Calu3 (cell line): ENCODE measurements at regions of chrX and their contacts with region 1.

Region 1: DNA sequence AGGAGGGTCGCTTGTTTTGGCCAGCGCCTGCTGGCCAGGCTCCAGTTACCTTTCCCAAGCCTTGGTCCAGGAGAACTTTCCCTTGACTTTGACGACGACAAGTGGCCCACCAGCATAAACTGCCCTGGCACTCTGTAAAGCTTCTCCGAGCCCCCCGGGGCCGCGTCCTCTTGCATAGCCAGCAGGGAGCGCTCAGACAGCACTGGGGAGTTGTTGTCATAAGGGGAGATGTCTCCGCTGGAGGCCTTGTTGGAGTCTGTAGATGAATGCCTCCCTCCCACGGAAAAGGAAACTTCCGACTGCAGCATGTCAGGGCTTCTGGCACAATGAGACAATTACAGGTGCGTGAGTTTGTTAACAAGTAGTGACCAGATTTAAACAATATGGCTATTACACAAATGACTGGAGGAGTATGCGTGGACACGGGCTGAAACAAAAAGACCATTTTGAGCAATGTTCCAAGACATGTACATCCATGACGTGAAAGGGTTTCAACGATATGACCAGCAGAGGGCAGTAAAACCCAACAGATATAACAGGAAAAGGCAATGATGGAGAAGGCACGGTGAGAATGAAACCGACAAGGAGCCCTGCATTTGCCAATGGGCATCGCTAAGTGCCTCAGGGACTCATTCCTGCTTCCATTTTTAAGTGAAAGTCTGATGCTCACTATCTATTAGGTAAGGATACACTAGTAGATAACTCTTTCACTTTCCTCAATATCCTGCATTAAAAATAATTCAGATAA is 33.0 kb downstream of the HCCS start:
- DNase-seq: peak; percentile 67
- H3K4me3 Mint-ChIP-seq: peak overlapping the region; percentile 33
- H3K27ac Mint-ChIP-seq: no peak overlapping the region
- H3K4me1 Mint-ChIP-seq: peaks cover 10% of the 10 kb centered on the region
- H3K27me3 Mint-ChIP-seq: no peaks in the 10 kb centered on the region
- CTCF ChIP-seq: no peak

Region 2: GRCh38 chrX:11010476-11010875 is 133.6 kb before region 1 on chrX:
- CTCF ChIA-PET with region 1: no interaction called
- intact Hi-C with region 1: no loop called
- DNase-seq: no peak
- H3K4me3 Mint-ChIP-seq: no peak overlapping the region
- H3K27ac Mint-ChIP-seq: no peak overlapping the region
- H3K4me1 Mint-ChIP-seq: peaks cover 38% of the 10 kb centered on the region
- H3K27me3 Mint-ChIP-seq: no peaks in the 10 kb centered on the region
- CTCF ChIP-seq: no peak

Region 3: DNA sequence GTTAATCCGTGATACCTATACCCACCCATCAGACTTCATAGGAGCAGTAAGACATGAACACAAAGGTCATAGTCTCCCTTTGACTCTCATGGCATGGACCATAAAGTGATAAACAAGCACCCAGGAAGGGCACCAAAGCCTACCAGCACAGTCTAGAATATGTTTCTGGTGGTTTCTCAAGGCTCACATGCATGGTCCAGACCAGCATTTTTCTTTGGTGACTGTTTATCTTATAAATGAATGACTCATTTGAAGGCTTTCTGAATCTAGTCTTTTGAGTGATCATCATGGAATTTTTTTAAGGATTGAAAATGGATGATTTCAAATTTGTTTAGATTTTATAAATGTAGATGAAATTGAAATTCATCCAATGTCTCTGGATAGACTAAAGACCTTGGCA is 117.2 kb after region 1 on chrX:
- CTCF ChIA-PET with region 1: no interaction called
- intact Hi-C with region 1: loop called (anchors 10 kb)
- DNase-seq: no peak
- H3K4me3 Mint-ChIP-seq: no peak overlapping the region
- H3K27ac Mint-ChIP-seq: no peak overlapping the region
- H3K4me1 Mint-ChIP-seq: no peaks in the 10 kb centered on the region
- H3K27me3 Mint-ChIP-seq: no peaks in the 10 kb centered on the region
- CTCF ChIP-seq: no peak

Region 4: GRCh38 chrX:11287505-11287904 is 143.4 kb after region 1 on chrX:
- CTCF ChIA-PET with region 1: interaction called, 3 read pairs
- intact Hi-C with region 1: loop called (anchors 1 kb)
- DNase-seq: peak; percentile 2
- H3K4me3 Mint-ChIP-seq: no peak overlapping the region
- H3K27ac Mint-ChIP-seq: no peak overlapping the region
- H3K4me1 Mint-ChIP-seq: no peaks in the 10 kb centered on the region
- H3K27me3 Mint-ChIP-seq: no peaks in the 10 kb centered on the region
- CTCF ChIP-seq: no peak

Region 5: DNA sequence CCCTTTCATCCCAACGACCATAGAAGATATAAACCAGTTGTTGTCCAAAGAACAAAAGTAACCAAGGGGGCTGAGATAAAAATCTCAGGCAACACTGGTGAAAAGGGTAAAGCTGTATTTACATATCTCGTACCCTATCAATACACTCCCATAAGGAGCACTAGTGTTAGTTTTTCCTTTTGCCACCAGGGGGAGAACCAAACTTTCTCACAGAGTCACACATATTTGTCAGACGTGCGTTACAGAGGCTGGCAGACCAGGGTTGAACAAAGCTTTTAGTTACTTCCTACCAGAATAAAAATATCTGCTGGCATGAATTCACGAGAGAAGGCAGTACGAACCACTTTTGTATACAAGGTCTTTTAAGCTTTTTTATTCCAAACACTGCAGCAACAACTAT is 237.4 kb after region 1 on chrX:
- CTCF ChIA-PET with region 1: no interaction called
- intact Hi-C with region 1: loop called (anchors 2 kb)
- DNase-seq: peak; percentile 55
- H3K4me3 Mint-ChIP-seq: no peak overlapping the region
- H3K27ac Mint-ChIP-seq: no peak overlapping the region
- H3K4me1 Mint-ChIP-seq: peaks cover 12% of the 10 kb centered on the region
- H3K27me3 Mint-ChIP-seq: no peaks in the 10 kb centered on the region
- CTCF ChIP-seq: peak; percentile 49

Region 6: GRCh38 chrX:11499076-11500044 is 355.3 kb after region 1 on chrX:
- CTCF ChIA-PET with region 1: no interaction called
- intact Hi-C with region 1: loop called (anchors 1 kb)
- DNase-seq: no peak
- H3K4me3 Mint-ChIP-seq: no peak overlapping the region
- H3K27ac Mint-ChIP-seq: no peak overlapping the region
- H3K4me1 Mint-ChIP-seq: no peaks in the 10 kb centered on the region
- H3K27me3 Mint-ChIP-seq: no peaks in the 10 kb centered on the region
- CTCF ChIP-seq: no peak

Region 7: GRCh38 chrX:11533211-11533651 is 389.1 kb after region 1 on chrX:
- CTCF ChIA-PET with region 1: no interaction called
- intact Hi-C with region 1: loop called (anchors 1 kb)
- DNase-seq: no peak
- H3K4me3 Mint-ChIP-seq: no peak overlapping the region
- H3K27ac Mint-ChIP-seq: no peak overlapping the region
- H3K4me1 Mint-ChIP-seq: no peaks in the 10 kb centered on the region
- H3K27me3 Mint-ChIP-seq: peaks cover 9% of the 10 kb centered on the region
- CTCF ChIP-seq: peak; percentile 49

Region 8: DNA sequence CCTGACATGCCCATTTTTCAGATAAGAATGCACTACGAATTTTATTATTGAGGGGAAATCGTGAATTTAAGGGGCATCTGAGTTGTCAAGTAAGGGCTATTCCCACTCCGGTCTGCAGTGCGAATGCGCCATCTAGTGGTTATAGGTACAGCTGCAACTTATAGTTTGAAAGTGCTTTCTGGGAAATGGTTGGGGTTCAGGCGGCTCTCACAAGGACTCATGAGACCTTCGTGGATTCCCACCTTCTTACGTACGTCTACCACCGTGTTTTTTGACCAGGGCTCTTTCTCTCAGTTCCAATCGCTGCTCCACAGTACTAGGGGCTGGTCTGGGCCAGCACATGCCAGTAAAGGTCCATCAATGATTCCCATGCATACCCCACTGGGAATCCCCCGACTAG is 626.2 kb after region 1 on chrX:
- CTCF ChIA-PET with region 1: no interaction called
- intact Hi-C with region 1: loop called (anchors 5 kb)
- DNase-seq: peak; percentile 9
- H3K4me3 Mint-ChIP-seq: no peak overlapping the region
- H3K27ac Mint-ChIP-seq: no peak overlapping the region
- H3K4me1 Mint-ChIP-seq: no peaks in the 10 kb centered on the region
- H3K27me3 Mint-ChIP-seq: no peaks in the 10 kb centered on the region
- CTCF ChIP-seq: peak; percentile 70